CD4-positive, alpha-beta memory T cell (primary cell): ENCODE measurements at regions of chr16 and their contacts with region 1.

Region 1: DNA sequence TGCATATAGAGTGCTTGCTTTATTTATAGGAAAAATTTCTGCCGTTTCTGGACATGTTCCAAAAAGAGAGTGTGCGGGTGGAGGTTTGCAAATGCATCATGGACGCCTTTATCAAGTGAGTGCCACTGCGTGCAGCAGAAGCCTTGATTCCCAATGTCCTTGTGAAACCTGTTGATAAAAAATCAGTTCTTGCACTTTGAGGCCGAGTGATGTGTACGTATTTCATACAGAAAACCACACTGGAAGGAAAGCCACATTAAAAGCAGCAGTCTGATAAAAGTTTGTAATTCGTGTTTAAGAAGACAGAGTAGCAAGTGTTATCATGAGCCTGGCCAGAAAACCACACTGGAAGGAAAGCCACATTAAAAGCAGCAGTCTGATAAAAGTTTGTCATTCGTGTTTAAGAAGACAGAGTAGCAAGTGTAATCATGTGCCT is 78.0 kb downstream of the KNOP1 start:
- DNase-seq: peak; percentile 60 to 76 (median 70)
- H3K4me3 ChIP-seq: no peak overlapping the region
- H3K4me3 Mint-ChIP-seq: peak overlapping the region in 7 of 8 donors; percentile 37 to 71 (median 53)
- H3K27ac ChIP-seq: no peak overlapping the region
- H3K27ac Mint-ChIP-seq: peak overlapping the region; percentile 33 to 81 (median 75)
- H3K4me1 ChIP-seq: peaks cover 16% of the 10 kb centered on the region
- H3K4me1 Mint-ChIP-seq: peaks cover 12 to 23% (median 17%) of the 10 kb centered on the region in 4 donors
- H3K27me3 ChIP-seq: no peaks in the 10 kb centered on the region
- H3K27me3 Mint-ChIP-seq: no peaks in the 10 kb centered on the region

Region 2: DNA sequence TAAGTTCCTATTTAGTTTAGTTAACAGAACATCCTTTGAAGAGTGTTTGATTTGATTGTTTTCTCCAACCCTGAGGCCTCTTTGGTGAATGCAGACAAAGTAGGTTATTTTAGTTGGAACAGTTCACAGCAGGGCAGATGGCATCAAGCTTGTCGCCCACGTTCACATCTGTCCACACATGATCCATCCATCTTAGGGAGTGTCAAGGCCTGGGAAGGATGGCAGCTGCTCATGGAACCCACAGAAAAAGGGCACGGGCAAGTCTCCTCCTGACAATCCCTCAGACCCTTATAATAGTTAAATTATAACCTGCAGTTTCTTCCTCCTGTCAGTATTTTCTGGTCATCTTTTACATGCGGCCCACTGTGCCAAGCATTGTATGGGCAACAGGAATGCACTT is 17.8 kb after region 1 on chr16:
- CTCF ChIA-PET with region 1: no interaction called
- POLR2A ChIA-PET with region 1: no interaction called
- intact Hi-C with region 1: no loop called
- DNase-seq: no peak
- H3K4me3 ChIP-seq: no peak overlapping the region
- H3K4me3 Mint-ChIP-seq: no peak overlapping the region
- H3K27ac ChIP-seq: no peak overlapping the region
- H3K27ac Mint-ChIP-seq: no peak overlapping the region
- H3K4me1 ChIP-seq: no peaks in the 10 kb centered on the region
- H3K4me1 Mint-ChIP-seq: peaks cover 0 to 3% (median 0%) of the 10 kb centered on the region in 4 donors
- H3K27me3 ChIP-seq: no peaks in the 10 kb centered on the region
- H3K27me3 Mint-ChIP-seq: no peaks in the 10 kb centered on the region

Region 3: GRCh38 chr16:19696328-19696727 is 56.3 kb after region 1 on chr16:
- CTCF ChIA-PET with region 1: interaction called, 12 read pairs
- POLR2A ChIA-PET with region 1: interaction called, 4 read pairs
- intact Hi-C with region 1: no loop called
- DNase-seq: peak; percentile 55 to 76 (median 67)
- H3K4me3 ChIP-seq: peak overlapping the region in 1 of 2 donors; percentile 20
- H3K4me3 Mint-ChIP-seq: peak overlapping the region; percentile 33 to 85 (median 74)
- H3K27ac ChIP-seq: peak overlapping the region; percentile 27
- H3K27ac Mint-ChIP-seq: peak overlapping the region; percentile 68 to 94 (median 92)
- H3K4me1 ChIP-seq: peaks cover 46% of the 10 kb centered on the region
- H3K4me1 Mint-ChIP-seq: peaks cover 42 to 71% (median 53%) of the 10 kb centered on the region in 4 donors
- H3K27me3 ChIP-seq: no peaks in the 10 kb centered on the region
- H3K27me3 Mint-ChIP-seq: no peaks in the 10 kb centered on the region

Region 4: GRCh38 chr16:19802612-19803011 is 162.6 kb after region 1 on chr16:
- CTCF ChIA-PET with region 1: no interaction called
- POLR2A ChIA-PET with region 1: no interaction called
- intact Hi-C with region 1: no loop called
- DNase-seq: no peak
- H3K4me3 ChIP-seq: no peak overlapping the region
- H3K4me3 Mint-ChIP-seq: no peak overlapping the region
- H3K27ac ChIP-seq: no peak overlapping the region
- H3K27ac Mint-ChIP-seq: no peak overlapping the region
- H3K4me1 ChIP-seq: peaks cover 15% of the 10 kb centered on the region
- H3K4me1 Mint-ChIP-seq: peaks cover 12 to 18% (median 16%) of the 10 kb centered on the region in 4 donors
- H3K27me3 ChIP-seq: no peaks in the 10 kb centered on the region
- H3K27me3 Mint-ChIP-seq: no peaks in the 10 kb centered on the region